Right ventricle myocardium inferior (tissue), 1 donor: ENCODE measurements at regions of chr14 and their contacts with region 1.

Region 1: DNA sequence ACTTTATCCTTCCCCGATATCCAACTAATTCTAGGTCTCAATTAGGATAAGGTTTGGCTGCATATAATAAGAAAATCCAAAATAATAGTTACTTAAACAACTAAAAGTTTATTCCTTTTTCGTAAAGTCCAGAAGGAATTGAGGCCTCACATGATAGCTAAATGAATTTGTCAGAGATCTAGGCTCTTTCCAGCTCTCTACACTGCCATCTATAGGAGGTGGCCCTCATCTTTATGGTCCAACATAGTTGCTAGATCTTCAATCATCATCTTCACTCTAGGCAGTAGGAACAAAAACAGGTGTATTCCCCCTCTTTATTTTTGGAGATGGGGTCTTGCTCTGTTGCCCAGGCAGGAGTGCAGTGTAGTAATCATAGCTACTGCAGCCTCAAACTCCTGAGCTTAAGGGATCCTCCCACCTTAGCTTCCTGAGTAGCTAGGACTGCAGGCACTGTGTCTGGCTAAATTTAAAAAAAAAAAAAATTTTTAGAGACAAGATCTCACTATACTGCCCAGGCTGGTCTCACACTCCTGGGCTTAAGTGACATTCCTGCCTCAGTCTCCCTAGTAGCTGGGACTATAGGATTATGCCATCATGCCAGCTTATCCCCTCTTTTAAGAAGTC is 46.5 kb upstream of the SAV1 start:
- DNase-seq: no peak
- ATAC-seq: no peak

Region 2: DNA sequence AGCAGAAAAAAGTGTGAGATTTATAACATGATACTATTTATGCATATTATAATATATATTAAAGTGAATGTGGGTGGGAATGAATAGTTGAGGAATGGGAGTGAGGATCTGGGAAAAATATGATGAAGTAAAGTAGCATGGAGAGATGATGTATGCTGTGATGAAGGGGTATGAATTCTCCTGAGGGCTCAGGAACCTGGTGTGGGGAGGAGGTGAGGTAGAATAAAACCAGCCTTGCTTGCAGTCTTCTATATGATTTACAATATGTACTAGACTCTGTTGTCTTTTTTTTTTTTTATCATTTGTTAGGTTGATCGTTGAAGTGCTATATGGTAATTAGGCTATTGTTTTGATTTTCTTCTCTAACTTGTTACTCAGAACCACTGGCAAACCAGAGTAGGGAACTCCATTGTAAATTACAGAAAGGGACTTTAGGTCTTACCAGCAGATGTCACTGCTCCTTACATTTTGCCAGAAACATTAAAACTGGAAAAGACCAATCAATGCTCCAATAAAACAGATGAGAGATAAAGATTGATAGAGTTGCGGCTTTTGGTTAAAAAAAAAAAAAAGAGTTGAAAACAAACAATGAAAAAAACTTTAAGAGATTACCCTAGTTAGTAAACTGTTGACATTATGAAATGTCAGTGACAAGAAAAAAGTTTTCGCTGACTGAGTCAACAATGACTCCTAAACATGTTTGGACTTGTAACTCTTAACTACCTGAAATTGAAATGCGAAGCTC is 114.7 kb before region 1 on chr14:
- intact Hi-C with region 1: loop called (anchors 5 kb)
- DNase-seq: no peak
- ATAC-seq: peak; percentile 62